IMR-90 (cell line): ENCODE measurements at regions of chr12 and their contacts with region 1.

Region 1: GRCh38 chr12:38890102-38890855 is 15.1 kb downstream of the CPNE8 start:
- DNase-seq: no peak
- ATAC-seq: no peak
- H3K4me3 ChIP-seq: no peak overlapping the region
- H3K27ac ChIP-seq: no peak overlapping the region
- H3K4me1 ChIP-seq: no peaks in the 10 kb centered on the region
- H3K27me3 ChIP-seq: no peaks in the 10 kb centered on the region
- CTCF ChIP-seq: no peak
- POLR2A ChIP-seq: no peak
- RAD21 ChIP-seq: no peak

Region 2: DNA sequence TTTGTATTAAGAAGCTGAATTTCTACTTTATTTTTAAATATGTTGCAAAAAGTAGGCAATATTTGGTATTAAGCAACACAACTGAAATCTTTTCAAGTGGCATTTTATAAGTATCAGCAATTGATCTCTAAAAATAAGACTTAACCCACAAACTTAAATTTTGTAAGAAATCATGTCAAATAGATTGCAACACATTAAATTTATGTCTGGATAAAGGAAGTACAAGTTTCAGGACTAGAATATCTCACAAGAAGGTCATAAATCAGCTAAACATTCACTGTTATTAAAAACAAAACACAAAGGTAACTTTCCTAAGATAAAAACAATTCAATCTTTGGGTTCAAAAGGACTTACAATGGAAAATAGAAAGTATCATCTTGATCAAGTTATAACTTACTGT is 17.7 kb before region 1 on chr12:
- CTCF ChIA-PET with region 1: no interaction called
- POLR2A ChIA-PET with region 1: interaction called, 11 read pairs
- dilution Hi-C with region 1: no loop called
- in situ Hi-C with region 1: no loop called
- intact Hi-C with region 1: no loop called
- DNase-seq: no peak
- ATAC-seq: no peak
- H3K4me3 ChIP-seq: no peak overlapping the region
- H3K27ac ChIP-seq: no peak overlapping the region
- H3K4me1 ChIP-seq: no peaks in the 10 kb centered on the region
- H3K27me3 ChIP-seq: no peaks in the 10 kb centered on the region
- CTCF ChIP-seq: no peak
- POLR2A ChIP-seq: no peak
- RAD21 ChIP-seq: no peak

Region 3: DNA sequence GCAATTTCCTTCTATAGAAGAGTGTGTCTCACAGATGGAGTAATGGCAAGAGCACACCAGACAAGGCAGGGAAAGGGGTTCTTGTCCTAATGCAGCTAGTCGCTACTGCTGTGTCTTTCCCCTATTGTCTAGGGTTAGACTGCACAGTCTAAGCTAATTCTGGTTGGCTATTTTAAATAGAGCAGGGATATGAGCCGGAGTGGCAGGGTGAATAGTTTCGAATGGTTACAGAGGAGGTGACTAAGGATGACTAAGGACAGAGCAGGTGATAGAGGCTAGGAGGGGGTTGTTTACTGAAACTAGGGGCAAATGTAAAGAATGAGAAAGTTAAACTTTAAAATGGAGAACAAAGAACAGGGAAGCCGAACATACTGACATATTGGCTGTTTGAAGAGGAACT is 40.7 kb after region 1 on chr12:
- CTCF ChIA-PET with region 1: no interaction called
- POLR2A ChIA-PET with region 1: no interaction called
- dilution Hi-C with region 1: no loop called
- in situ Hi-C with region 1: no loop called
- intact Hi-C with region 1: no loop called
- DNase-seq: no peak
- ATAC-seq: no peak
- H3K4me3 ChIP-seq: no peak overlapping the region
- H3K27ac ChIP-seq: no peak overlapping the region
- H3K4me1 ChIP-seq: no peaks in the 10 kb centered on the region
- H3K27me3 ChIP-seq: no peaks in the 10 kb centered on the region
- CTCF ChIP-seq: no peak
- POLR2A ChIP-seq: no peak
- RAD21 ChIP-seq: no peak